ENCODE measurements at regions of chr17 and their contacts with region 1.

Region 1: DNA sequence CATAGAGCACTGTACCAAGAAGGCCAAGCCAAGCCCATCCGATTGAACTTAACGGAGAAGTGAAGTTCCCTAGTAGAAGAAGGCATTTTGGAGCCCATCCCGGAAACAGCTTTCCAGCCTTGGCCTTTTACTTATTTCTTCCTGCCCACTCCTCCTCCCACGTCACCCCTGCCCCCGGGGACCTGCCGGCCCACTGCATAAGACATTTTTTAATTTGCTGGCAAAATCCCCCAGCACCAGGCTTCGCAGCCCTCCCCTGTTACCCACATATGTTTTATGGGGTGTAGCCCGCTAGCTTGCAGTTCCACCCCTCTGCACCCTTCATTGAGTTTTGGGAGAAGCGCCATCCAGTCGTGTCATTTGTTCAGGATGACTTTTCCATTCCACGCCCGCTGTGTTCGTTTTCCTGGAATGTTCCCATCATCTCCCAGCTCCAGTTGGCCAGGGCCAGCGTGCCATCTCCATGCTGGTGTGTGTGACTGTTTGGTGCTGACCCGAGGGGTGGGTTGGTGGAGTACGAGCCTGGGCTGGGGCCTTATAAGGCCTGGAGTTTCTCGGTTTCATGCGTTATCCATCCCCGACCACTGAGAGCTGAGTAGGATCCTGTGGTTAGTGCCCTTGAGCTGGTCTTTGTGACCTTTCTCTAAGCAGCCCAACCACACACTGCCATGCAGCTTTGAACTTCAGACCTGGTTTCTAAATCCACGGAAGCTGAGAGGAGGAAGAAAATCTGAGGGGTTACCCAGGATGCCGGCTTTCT is 20.0 kb upstream of the TBX2 start:
- DNase-seq: no peak
- H3K4me3 ChIP-seq: no peak overlapping the region
- H3K27ac ChIP-seq: peak overlapping the region; percentile 7 to 21
- H3K4me1 ChIP-seq: no peaks in the 10 kb centered on the region
- H3K27me3 ChIP-seq: no peaks in the 10 kb centered on the region
- CTCF ChIP-seq: no peak
- POLR2A ChIP-seq: no peak

Region 2: GRCh38 chr17:61314368-61315078 is 65.1 kb before region 1 on chr17:
- intact Hi-C with region 1: loop called (anchors 10 kb)
- DNase-seq: peak; percentile 69 to 72
- H3K4me3 ChIP-seq: no peak overlapping the region
- H3K27ac ChIP-seq: peak overlapping the region; percentile 75 to 86
- H3K4me1 ChIP-seq: peaks cover 16 to 23% of the 10 kb centered on the region in 2 donors
- H3K27me3 ChIP-seq: no peaks in the 10 kb centered on the region
- CTCF ChIP-seq: peak; percentile 10 to 41 (median 24)
- POLR2A ChIP-seq: no peak

Region 3: GRCh38 chr17:61444831-61445230 is 65.2 kb after region 1 on chr17:
- intact Hi-C with region 1: no loop called
- DNase-seq: no peak
- H3K4me3 ChIP-seq: no peak overlapping the region
- H3K27ac ChIP-seq: no peak overlapping the region
- H3K4me1 ChIP-seq: no peaks in the 10 kb centered on the region
- H3K27me3 ChIP-seq: no peaks in the 10 kb centered on the region
- CTCF ChIP-seq: no peak
- POLR2A ChIP-seq: no peak

Measured in uterus (tissue), 4 donors.